Activated T-helper 2 cell treated with anti-CD3 and anti-CD28 coated beads, Interferon-gamma antibody, Interleukin-2, Interleukin-4, amounts not matched to agents 10 μg/mL and 5 μg/mL and 100 μg/mL, durations not matched to agents 14 hours and 24 hours and 36 hours (primary cell): ENCODE measurements at regions of chr13 and their contacts with region 1.

Region 1: GRCh38 chr13:110715395-110716235 is 2.1 kb downstream of the ING1 start:
- DNase-seq: peak; percentile 96
- H3K4me3 Mint-ChIP-seq: peak overlapping the region; percentile 90
- H3K27ac Mint-ChIP-seq: peak overlapping the region; percentile 95
- H3K4me1 Mint-ChIP-seq: peaks cover 22% of the 10 kb centered on the region
- H3K27me3 Mint-ChIP-seq: no peaks in the 10 kb centered on the region

Region 2: DNA sequence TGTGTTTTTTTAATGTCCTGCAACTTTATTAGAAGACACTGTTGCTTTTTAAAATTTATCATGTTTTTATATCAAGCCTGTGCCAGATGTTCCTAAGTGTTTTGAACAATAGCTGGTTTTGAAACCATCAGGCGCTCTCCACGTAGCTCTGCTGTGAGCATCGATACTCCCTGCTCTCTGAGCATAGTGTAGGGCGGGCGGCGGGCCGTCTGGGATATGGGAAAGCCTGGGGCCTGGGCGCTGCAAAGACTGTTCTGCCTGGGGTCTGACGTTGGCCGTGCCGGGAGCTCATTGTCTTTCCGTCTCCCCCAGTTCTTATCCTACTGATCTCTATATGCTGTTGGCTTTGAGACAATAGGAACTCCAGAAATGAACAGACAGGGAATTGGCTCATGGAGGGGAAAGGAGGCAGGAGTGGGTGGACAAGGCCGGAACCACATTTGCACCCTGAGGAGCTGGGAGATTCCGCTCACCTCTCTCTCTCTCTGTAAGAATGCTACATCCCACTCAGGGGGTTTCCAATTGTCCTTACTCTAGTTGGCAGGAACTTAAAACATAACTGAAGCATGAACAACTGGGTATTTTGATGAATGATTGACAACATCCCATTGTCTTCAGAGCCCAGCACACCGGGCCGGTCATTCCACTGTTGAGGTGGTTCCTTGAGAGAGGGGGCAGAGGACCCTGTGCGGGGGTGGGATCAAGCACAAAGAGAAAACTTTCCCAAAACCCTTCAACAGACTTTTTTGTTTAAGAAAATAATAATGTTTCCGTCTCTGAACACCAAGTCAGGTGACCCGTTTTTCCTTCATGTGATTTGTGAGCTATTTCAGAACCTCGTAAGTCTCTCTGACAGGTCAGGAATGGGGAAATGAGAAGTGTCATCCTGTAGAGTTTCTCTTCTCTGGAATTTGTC is 343.8 kb before region 1 on chr13:
- intact Hi-C with region 1: no loop called
- DNase-seq: no peak
- H3K4me3 Mint-ChIP-seq: no peak overlapping the region
- H3K27ac Mint-ChIP-seq: no peak overlapping the region
- H3K4me1 Mint-ChIP-seq: peaks cover 5% of the 10 kb centered on the region
- H3K27me3 Mint-ChIP-seq: peaks cover 17% of the 10 kb centered on the region

Region 3: GRCh38 chr13:110615322-110616102 is 100.1 kb before region 1 on chr13 and contains the start of gene NAXD:
- intact Hi-C with region 1: loop called (anchors 1 kb)
- DNase-seq: peak; percentile 76
- H3K4me3 Mint-ChIP-seq: peak within 1 kb of the TSS; percentile 93
- H3K27ac Mint-ChIP-seq: peak within 1 kb of the TSS; percentile 95
- H3K4me1 Mint-ChIP-seq: peaks cover 26% of the 10 kb centered on the region
- H3K27me3 Mint-ChIP-seq: no peaks in the 10 kb centered on the region
- total RNA-seq, gene NAXD: 21.7 and 22.1 TPM in 2 replicates

Region 4: DNA sequence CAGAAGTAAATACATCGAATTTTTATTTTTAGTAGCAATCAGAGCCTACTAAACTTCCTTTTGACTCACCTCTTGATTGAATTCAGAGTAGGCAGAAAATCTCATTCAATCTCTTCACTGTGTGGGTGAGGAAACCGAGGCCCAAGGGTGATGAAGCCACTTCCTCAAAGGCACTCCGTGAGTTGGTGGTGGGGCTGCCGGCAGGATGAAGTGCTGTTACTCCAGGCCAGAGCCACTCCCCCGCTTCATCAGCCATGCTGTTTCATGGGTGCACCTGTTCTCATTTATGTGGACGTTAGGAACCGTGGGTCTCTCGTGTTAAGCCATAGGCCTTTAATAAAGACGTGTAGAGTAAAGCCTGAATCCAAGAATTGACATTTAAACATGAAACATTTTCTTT is 11.1 kb after region 1 on chr13:
- intact Hi-C with region 1: loop called (anchors 1 kb)
- DNase-seq: peak; percentile 31
- H3K4me3 Mint-ChIP-seq: peak overlapping the region; percentile 14
- H3K27ac Mint-ChIP-seq: no peak overlapping the region
- H3K4me1 Mint-ChIP-seq: peaks cover 14% of the 10 kb centered on the region
- H3K27me3 Mint-ChIP-seq: peaks cover 7% of the 10 kb centered on the region

Region 5: GRCh38 chr13:110819203-110820014 is 103.8 kb after region 1 on chr13:
- intact Hi-C with region 1: loop called (anchors 5 kb)
- DNase-seq: peak; percentile 58
- H3K4me3 Mint-ChIP-seq: no peak overlapping the region
- H3K27ac Mint-ChIP-seq: no peak overlapping the region
- H3K4me1 Mint-ChIP-seq: peaks cover 3% of the 10 kb centered on the region
- H3K27me3 Mint-ChIP-seq: peaks cover 10% of the 10 kb centered on the region

Region 6: DNA sequence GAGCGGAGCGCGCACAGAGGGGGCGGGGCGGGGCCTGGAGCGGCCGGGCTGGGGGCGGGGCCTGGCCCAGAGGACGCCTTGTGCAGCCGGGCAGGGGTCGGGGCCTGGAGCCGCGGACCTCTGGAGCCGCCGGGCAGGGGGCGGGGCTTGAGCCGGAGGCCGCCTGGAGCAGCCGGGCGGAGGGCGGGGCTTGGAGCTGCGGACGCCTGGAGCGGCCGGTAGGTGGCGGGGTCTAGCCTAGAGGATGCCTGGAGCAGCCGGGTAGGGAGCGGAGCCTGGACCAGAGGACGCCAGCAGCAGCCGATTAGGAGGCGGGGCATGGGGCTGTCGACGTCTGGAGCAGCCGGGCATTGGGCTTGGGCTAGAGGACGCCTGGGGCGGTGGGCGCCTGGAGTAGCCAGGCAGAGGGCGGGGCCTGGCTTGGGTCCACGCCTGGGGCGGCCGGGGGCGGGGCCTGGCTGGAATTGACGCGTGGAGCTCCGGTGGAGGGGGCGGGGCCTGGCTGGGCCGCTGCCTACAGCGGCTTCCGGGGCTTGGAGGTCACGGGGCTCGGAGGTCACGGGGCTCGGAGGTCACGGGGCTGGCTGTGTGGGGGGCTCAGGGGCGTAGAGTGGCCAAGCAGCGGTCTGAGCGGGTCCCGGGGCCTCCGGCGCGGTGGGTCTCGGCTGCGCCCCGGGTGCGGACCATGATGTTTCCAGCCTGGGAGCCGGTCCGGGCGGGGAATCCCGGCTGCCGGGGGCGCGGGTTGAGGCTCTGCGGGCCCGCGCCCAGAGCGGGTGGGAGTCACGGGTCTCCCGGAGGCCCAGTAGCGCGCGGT is 199.7 kb after region 1 on chr13 and contains the start of gene ANKRD10:
- intact Hi-C with region 1: loop called (anchors 1 kb)
- DNase-seq: peak; percentile 97
- H3K4me3 Mint-ChIP-seq: peak within 1 kb of the TSS; percentile 90
- H3K27ac Mint-ChIP-seq: peak within 1 kb of the TSS; percentile 96
- H3K4me1 Mint-ChIP-seq: peaks cover 37% of the 10 kb centered on the region
- H3K27me3 Mint-ChIP-seq: no peaks in the 10 kb centered on the region
- total RNA-seq, gene ANKRD10: 111 and 120 TPM in 2 replicates

Region 7: DNA sequence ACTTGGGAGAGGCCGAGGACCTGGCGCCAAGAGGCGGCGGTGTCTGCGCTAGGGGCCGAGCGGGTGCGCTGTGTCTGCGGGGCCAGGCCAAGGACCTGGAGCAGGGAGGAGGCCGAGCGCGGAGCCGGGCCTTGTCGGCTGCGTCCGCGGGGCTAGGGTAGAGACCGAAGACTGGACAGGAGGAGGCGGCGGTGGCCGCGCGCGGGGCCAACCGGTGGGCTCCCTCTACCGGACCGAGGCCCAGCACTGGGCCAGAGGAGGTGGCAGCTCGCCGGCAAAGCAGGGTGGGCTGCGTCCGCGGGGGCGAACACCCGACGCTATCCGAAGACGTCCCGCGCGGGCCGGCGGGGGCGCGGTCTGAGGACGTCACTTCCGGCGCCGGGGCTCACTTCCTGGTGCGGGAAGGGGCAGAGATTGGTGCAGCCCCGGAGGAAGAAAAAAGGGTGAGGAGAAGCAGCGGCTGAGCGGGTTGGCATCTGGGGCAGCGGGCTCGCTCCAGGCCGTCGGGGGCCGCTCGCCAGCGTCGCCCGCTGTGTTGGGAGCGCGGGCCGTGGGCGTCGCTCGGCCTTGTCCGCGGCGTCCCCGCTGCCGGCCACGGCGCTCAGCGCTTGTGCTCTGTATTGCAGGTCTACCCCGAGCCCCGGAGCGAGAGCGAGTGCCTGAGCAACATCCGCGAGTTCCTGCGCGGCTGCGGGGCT is 437.8 kb after region 1 on chr13:
- intact Hi-C with region 1: loop called (anchors 5 kb)
- DNase-seq: peak; percentile 91
- H3K4me3 Mint-ChIP-seq: peak overlapping the region; percentile 91
- H3K27ac Mint-ChIP-seq: peak overlapping the region; percentile 95
- H3K4me1 Mint-ChIP-seq: peaks cover 25% of the 10 kb centered on the region
- H3K27me3 Mint-ChIP-seq: peaks cover 30% of the 10 kb centered on the region

Region 8: DNA sequence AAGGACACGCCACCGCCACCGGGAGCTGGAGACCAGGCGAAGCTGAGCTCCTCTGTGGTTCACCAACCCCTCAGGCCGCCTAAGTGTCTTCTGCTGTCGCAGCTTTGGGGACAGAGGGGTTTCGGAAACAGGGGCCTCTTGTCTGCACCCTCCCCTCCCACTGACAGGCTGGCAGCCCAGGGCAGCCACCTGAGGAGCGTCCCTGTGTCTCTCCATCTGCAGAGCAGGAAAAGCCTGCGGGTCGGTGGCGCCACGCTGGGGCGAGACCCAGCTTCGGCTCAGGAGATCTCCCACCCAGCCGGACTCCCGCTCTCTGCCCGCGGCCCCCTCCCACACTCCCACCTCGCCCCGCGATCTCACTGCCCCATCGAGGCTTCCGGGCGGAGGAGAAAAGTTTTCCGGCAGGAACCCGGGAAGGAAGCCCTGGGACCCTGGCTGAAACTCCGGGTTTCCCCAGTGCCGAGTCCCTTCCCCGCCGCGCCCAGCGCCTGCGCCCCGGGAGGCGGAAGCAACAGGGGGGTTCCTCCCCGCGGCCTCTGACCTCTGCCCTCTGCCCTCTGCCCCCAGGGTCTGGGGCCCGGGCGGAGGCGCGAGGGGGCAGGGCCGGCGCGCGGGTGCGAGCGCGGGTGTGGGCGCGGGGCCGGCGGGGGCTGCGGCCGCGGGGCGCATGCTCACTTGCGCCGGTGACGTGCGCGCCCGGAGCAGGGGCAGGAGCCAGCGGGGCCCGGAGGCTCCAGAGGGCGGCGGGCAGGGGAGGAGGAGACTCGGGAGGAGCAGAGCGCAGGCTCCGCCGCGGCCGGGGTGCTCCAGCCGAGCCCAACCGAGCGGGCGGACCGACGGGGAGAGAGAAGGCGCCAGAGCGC is 1973.9 kb after region 1 on chr13 and contains the start of gene ATP11A:
- intact Hi-C with region 1: loop called (anchors 5 kb)
- DNase-seq: peak; percentile 81
- H3K4me3 Mint-ChIP-seq: peak within 1 kb of the TSS; percentile 87
- H3K27ac Mint-ChIP-seq: peak within 1 kb of the TSS; percentile 95
- H3K4me1 Mint-ChIP-seq: peaks cover 44% of the 10 kb centered on the region
- H3K27me3 Mint-ChIP-seq: no peaks in the 10 kb centered on the region
- total RNA-seq, gene ATP11A: 72.0 and 75.2 TPM in 2 replicates